Gastrocnemius medialis (tissue), 4 donors: ENCODE measurements at regions of chr3 and their contacts with region 1.

Region 1: GRCh38 chr3:42804106-42804830 is at the start of gene HIGD1A:
- DNase-seq: peak; percentile 96
- ATAC-seq: peak; percentile 89 to 94
- H3K4me3 ChIP-seq: peak within 1 kb of the TSS; percentile 78 to 98 (median 88)
- H3K27ac ChIP-seq: peak within 1 kb of the TSS; percentile 95 to 98 (median 97)
- H3K4me1 ChIP-seq: peaks cover 36 to 41% of the 10 kb centered on the region in 2 donors
- H3K27me3 ChIP-seq: no peaks in the 10 kb centered on the region
- CTCF ChIP-seq: no peak
- POLR2A ChIP-seq: peak; percentile 98
- total RNA-seq, gene HIGD1A: 123 to 156 (median 139) TPM

Region 2: GRCh38 chr3:41216993-41217392 is 1587.3 kb before region 1 on chr3:
- in situ Hi-C with region 1: no loop called
- intact Hi-C with region 1: loop called (anchors 10 kb)
- DNase-seq: no peak
- ATAC-seq: no peak
- H3K4me3 ChIP-seq: no peak overlapping the region
- H3K27ac ChIP-seq: no peak overlapping the region
- H3K4me1 ChIP-seq: peaks cover 87 to 89% of the 10 kb centered on the region in 2 donors
- H3K27me3 ChIP-seq: no peaks in the 10 kb centered on the region
- CTCF ChIP-seq: no peak
- POLR2A ChIP-seq: no peak